ENCODE measurements at regions of chr7 and their contacts with region 1.

Region 1: DNA sequence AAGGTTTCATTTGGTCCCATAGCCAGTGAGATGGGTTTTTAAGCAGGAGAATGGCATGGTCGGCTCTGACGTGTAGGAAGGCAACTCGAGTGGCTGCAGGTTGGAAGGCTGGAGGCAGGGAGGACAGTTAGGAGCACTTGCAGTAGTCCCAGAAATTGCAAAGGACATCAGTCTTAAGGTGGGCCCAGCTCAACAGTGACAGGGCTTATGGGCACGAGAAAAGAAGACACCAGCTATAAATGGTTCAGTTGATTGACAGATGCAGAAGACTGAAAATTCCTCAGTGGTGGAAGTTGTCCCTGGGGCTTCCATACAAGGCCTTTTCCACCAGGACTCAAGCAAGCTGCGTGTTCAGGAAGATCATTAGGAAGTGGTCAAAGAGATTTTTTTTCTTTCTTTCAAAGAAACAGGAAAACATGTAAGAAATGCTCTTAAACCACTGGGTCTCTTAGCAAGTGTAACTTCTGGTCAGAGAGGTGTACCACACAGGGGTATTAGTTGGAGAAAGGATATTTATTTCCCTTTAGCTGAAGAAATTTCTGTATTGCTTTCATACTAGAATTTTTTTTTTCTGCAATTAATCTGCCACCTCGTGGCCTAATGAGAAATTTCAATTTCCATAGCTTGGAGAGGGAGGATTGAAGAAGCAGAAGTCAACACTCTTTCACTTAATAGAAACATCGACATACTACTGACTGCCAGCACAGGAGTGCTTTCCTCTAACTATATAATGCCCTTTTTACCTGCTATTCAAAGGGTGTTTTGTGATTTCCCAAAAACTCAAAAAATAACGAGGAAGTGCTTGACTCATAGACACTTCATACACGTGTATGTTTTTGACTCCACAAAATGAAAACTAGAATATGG is 177.4 kb upstream of the NAMPT start:
- DNase-seq: peak; percentile 55 to 71 (median 60)
- ATAC-seq: peak; percentile 81
- H3K4me3 ChIP-seq: no peak overlapping the region
- H3K27ac ChIP-seq: no peak overlapping the region
- H3K4me1 ChIP-seq: peaks cover 0 to 15% of the 10 kb centered on the region in 2 experiments; a peak in 3 of 5 replicates
- H3K27me3 ChIP-seq: no peaks in the 10 kb centered on the region
- CTCF ChIP-seq: peak; percentile 58 to 86 (median 62); a peak in 5 of 6 replicates
- EP300 ChIP-seq: no peak; the same call in 1 of the 2 replicates
- POLR2A ChIP-seq: no peak
- RAD21 ChIP-seq: peak; percentile 95 to 98

Region 2: GRCh38 chr7:106367018-106367420 is 95.2 kb before region 1 on chr7:
- CTCF ChIA-PET with region 1: no interaction called
- POLR2A ChIA-PET with region 1: no interaction called
- in situ Hi-C with region 1: no loop called
- intact Hi-C with region 1: loop called (anchors 1 kb)
- DNase-seq: peak in 3 of 4 experiments; percentile 33 to 77 (median 68)
- ATAC-seq: peak; percentile 96
- H3K4me3 ChIP-seq: no peak overlapping the region
- H3K27ac ChIP-seq: no peak overlapping the region
- H3K4me1 ChIP-seq: peaks cover 0 to 18% of the 10 kb centered on the region in 2 experiments; a peak in 4 of 5 replicates
- H3K27me3 ChIP-seq: no peaks in the 10 kb centered on the region
- CTCF ChIP-seq: peak; percentile 69 to 87 (median 74)
- EP300 ChIP-seq: no peak; the same call in 1 of the 2 replicates
- POLR2A ChIP-seq: no peak
- RAD21 ChIP-seq: peak; percentile 85 to 92

Region 3: GRCh38 chr7:106520962-106521940 is 59.0 kb after region 1 on chr7:
- CTCF ChIA-PET with region 1: no interaction called
- POLR2A ChIA-PET with region 1: no interaction called
- in situ Hi-C with region 1: no loop called
- intact Hi-C with region 1: loop called (anchors 2 kb)
- DNase-seq: peak in 1 of 4 experiments; percentile 38
- ATAC-seq: peak; percentile 60
- H3K4me3 ChIP-seq: no peak overlapping the region
- H3K27ac ChIP-seq: no peak overlapping the region
- H3K4me1 ChIP-seq: peaks cover 0 to 15% of the 10 kb centered on the region in 2 experiments; a peak in 3 of 5 replicates
- H3K27me3 ChIP-seq: no peaks in the 10 kb centered on the region; a peak in 1 of 5 replicates
- CTCF ChIP-seq: peak; percentile 47 to 62 (median 50); a peak in 5 of 6 replicates
- EP300 ChIP-seq: no peak
- POLR2A ChIP-seq: no peak
- RAD21 ChIP-seq: peak in 1 of 2 experiments; percentile 49; a peak in 2 of 4 replicates

Region 4: DNA sequence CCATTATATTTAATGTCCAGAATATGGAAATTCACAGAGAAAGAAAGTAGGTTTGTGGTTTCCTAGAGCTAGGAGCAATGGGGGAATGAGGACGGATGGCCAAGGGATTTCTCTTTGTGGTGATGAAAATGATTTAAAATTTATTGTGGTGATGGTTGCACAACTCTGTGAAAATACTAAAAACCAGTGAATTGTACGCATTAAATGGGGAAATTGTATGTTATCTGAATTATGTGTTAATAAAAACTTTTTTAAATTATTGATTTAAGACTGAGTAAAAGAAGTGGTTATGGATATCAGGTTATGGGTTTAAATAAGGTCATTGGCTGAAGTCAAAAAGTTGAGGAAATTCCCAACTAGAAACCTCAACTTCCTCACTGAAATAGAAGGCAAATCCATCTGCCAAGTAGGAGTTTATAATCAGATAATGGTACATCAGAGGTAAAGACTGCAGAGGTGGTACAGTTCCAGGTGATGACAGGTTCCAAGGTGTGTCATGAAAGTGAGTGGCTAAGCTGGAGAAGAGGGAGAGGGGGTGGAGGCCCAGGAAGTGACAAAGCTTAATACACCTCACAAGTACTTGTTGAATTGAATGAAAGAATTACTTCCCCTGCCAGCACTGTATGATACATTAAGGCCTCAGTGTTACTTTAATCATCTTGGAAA is 267.6 kb after region 1 on chr7:
- CTCF ChIA-PET with region 1: no interaction called
- POLR2A ChIA-PET with region 1: no interaction called
- in situ Hi-C with region 1: no loop called
- intact Hi-C with region 1: no loop called
- DNase-seq: no peak
- ATAC-seq: no peak
- H3K4me3 ChIP-seq: no peak overlapping the region
- H3K27ac ChIP-seq: no peak overlapping the region
- H3K4me1 ChIP-seq: peaks cover 0 to 23% of the 10 kb centered on the region in 2 experiments; a peak in 3 of 5 replicates
- H3K27me3 ChIP-seq: no peaks in the 10 kb centered on the region
- CTCF ChIP-seq: no peak
- EP300 ChIP-seq: no peak
- POLR2A ChIP-seq: no peak
- RAD21 ChIP-seq: no peak